ENCODE measurements at regions of chr17 and their contacts with region 1.

Region 1: GRCh38 chr17:40203131-40203530 is 16.0 kb upstream of the WIPF2 start:
- DNase-seq: no peak
- H3K4me3 ChIP-seq: no peak overlapping the region
- H3K27ac ChIP-seq: no peak overlapping the region
- H3K4me1 ChIP-seq: no peaks in the 10 kb centered on the region
- CTCF ChIP-seq: no peak

Region 2: DNA sequence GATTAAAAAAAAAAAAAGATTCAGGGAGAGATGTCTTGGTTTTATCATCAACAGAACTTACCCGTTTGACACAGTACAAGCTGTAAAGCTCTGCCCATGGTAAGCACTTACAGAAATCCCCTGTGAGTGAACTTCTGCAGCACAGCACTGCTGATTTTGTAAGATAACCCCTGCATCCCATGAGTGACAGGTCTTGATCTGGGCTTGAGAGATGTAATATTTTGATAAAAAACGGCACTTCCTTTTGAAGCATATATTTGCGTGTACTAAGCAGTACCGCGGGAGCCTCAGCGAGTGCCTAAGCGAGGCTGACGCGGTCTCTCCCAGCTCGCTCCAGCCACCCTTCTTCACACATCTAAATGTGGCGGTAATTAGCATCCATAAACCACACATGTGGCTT is 389.5 kb before region 1 on chr17:
- CTCF ChIA-PET with region 1: no interaction called
- POLR2A ChIA-PET with region 1: no interaction called
- intact Hi-C with region 1: no loop called
- DNase-seq: no peak
- H3K4me3 ChIP-seq: no peak overlapping the region
- H3K27ac ChIP-seq: no peak overlapping the region
- H3K4me1 ChIP-seq: peaks cover 11% of the 10 kb centered on the region
- CTCF ChIP-seq: no peak

Region 3: DNA sequence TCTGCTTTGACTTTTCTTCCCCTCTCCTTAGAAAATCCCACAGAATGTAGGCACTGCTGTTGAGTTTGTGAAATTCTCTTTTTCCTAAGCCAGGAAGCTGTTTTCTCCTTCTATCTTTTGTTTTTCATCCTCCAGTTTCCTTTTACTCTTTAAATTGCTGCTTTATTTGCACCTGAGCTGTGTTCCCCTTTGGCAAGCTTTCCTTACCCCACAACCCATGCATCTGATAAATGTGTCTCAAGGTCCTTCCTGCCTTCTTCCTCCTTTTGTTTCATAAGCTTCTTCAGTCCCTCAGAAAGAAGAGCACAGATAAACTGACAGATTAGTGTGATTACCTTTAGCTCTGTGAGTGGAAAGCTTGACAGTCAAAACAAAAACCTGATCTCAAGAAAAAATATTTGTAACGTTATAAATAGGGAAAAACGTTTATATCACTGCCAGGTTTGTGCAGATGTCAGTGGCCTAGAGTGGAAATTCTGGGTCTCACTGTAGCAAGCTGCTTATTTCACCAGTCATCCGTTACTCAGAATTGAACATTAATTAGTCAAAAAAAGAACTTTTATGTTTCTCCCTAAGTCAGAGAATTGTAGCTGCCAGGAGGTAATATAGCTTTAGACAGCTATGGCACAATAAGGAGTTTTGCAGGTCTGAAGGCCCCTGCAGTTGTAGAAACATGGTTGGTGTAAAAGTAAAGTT is 308.3 kb before region 1 on chr17:
- CTCF ChIA-PET with region 1: no interaction called
- POLR2A ChIA-PET with region 1: no interaction called
- intact Hi-C with region 1: no loop called
- DNase-seq: peak; percentile 60
- H3K4me3 ChIP-seq: no peak overlapping the region
- H3K27ac ChIP-seq: peak overlapping the region; percentile 45
- H3K4me1 ChIP-seq: peaks cover 28% of the 10 kb centered on the region
- CTCF ChIP-seq: no peak

Region 4: DNA sequence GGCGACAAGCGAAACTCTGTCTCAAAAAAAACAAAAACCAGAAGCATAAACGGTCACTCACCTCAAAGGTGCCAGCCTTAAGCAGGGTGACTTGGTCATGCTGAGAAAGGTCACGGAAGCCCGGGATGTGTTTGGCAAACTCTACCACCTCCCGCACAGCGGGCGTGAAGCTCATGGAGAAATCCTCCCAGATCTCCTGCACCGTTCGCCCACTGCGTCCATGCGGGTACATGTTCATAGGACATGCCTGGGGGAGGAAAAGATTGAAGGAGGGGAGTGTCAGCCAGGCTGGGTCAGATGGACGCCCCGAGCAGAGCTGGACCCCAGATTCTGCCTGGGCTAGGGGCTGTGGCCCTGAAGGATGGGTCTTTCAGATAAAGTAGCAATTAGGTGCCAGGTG is 108.3 kb before region 1 on chr17:
- CTCF ChIA-PET with region 1: no interaction called
- POLR2A ChIA-PET with region 1: no interaction called
- intact Hi-C with region 1: no loop called
- DNase-seq: no peak
- H3K4me3 ChIP-seq: no peak overlapping the region
- H3K27ac ChIP-seq: no peak overlapping the region
- H3K4me1 ChIP-seq: peaks cover 43% of the 10 kb centered on the region
- CTCF ChIP-seq: no peak

Region 5: DNA sequence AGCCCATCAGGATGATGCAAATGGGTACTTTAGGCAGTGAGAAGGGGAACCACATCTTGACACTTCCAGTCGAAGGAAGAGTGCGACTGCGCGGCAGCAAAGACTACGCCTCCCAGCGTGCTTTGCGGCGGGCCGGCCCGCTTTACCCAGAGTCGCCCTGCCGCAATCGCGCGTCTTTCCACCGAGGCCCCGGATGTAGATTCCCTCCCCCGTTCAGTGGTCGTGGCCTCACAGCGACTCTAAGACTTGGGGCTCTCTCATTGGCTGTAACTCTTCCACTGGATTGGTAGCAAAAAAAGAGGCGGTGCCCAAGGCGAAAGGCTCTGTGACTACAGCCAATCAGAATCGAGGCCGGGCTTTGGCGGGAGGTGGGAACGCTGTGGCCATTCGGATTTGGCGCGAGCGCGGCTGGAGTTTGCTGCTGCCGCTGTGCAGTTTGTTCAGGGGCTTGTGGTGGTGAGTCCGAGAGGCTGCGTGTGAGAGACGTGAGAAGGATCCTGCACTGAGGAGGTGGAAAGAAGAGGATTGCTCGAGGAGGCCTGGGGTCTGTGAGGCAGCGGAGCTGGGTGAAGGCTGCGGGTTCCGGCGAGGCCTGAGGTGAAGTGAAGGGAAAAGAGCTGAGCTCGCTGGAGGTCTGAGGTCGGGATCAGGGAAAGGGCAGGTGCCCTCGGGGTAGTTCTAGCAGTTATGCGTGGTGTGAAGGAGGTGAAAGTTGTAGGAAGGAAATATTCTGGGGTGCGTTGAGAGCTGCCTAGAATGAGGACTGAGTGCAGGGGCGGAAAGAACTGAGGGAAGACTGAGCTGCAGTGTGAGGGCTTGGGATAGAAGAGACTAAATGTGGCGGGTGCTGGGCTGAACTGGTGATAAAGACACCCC is 84.6 kb after region 1 on chr17 and contains the start of gene CDC6:
- CTCF ChIA-PET with region 1: interaction called, 3 read pairs
- POLR2A ChIA-PET with region 1: interaction called, 3 read pairs
- intact Hi-C with region 1: loop called (anchors 1 kb)
- DNase-seq: peak; percentile 100
- H3K4me3 ChIP-seq: peak within 1 kb of the TSS; percentile 97
- H3K27ac ChIP-seq: peak within 1 kb of the TSS; percentile 89
- H3K4me1 ChIP-seq: peaks cover 31% of the 10 kb centered on the region
- CTCF ChIP-seq: no peak
- total RNA-seq, gene CDC6: 72.3 and 75.2 TPM in 2 replicates

Region 6: GRCh38 chr17:40355123-40355803 is 152.1 kb after region 1 on chr17:
- CTCF ChIA-PET with region 1: no interaction called
- POLR2A ChIA-PET with region 1: no interaction called
- intact Hi-C with region 1: loop called (anchors 1 kb)
- DNase-seq: peak; percentile 69
- H3K4me3 ChIP-seq: no peak overlapping the region
- H3K27ac ChIP-seq: no peak overlapping the region
- H3K4me1 ChIP-seq: peaks cover 8% of the 10 kb centered on the region
- CTCF ChIP-seq: peak; percentile 97